ENCODE measurements at regions of chr1 and their contacts with region 1.

Region 1: GRCh38 chr1:58903514-58904298 is 119.9 kb upstream of the JUN start:
- DNase-seq: peak; percentile 85 to 98
- H3K4me3 ChIP-seq: peak overlapping the region; percentile 59 to 76
- H3K27ac ChIP-seq: peak overlapping the region; percentile 91 to 97
- H3K4me1 ChIP-seq: peaks cover 2 to 7% of the 10 kb centered on the region in 2 donors
- H3K27me3 ChIP-seq: no peaks in the 10 kb centered on the region
- CTCF ChIP-seq: no peak

Region 2: GRCh38 chr1:58401991-58402390 is 501.7 kb before region 1 on chr1:
- intact Hi-C with region 1: no loop called
- DNase-seq: no peak
- H3K4me3 ChIP-seq: no peak overlapping the region
- H3K27ac ChIP-seq: peak overlapping the region in 1 of 2 donors; percentile 56
- H3K4me1 ChIP-seq: no peaks in the 10 kb centered on the region
- H3K27me3 ChIP-seq: no peaks in the 10 kb centered on the region
- CTCF ChIP-seq: no peak

Region 3: DNA sequence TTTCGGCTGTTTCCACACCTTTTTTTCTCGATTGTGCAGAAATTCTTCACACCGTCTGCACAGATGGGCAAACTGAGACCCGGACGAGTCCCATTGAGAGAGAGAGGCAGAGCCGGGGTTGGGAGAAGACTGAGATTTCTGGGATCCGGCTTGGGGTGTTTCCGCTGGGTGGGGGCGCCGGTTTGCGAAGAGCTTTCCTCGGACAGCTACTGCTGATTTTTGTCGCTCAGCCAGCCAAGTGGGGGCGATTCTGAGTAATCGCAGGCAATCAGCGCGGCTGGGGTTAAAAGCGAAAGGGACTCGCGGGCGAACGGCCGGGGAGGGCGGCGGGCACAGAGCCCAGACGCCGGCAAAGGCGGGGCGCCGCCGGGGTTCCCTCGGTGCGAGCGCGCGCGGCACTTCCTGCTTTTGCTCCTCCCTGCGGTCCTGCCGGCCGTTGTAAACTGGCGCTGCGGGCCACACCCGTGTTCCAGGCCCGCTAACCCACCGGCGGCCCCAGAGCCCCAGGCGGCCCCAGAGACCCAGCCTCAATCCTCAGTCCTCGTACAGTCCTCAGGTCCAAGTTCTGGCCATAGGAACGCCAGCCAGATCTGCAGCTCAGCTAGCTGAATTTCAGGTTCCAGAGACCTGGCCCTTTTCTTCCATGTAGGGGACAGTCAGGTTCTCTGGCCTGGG is 87.5 kb before region 1 on chr1:
- intact Hi-C with region 1: loop called (anchors 2 kb)
- DNase-seq: peak; percentile 47 to 94
- H3K4me3 ChIP-seq: peak overlapping the region; percentile 64 to 83
- H3K27ac ChIP-seq: peak overlapping the region; percentile 86 to 97
- H3K4me1 ChIP-seq: peaks cover 5 to 25% of the 10 kb centered on the region in 2 donors
- H3K27me3 ChIP-seq: no peaks in the 10 kb centered on the region
- CTCF ChIP-seq: no peak

Region 4: GRCh38 chr1:58883037-58883887 is 20.4 kb before region 1 on chr1:
- intact Hi-C with region 1: loop called (anchors 2 kb)
- DNase-seq: peak; percentile 63 to 91
- H3K4me3 ChIP-seq: no peak overlapping the region
- H3K27ac ChIP-seq: peak overlapping the region; percentile 62 to 77
- H3K4me1 ChIP-seq: peaks cover 13 to 35% of the 10 kb centered on the region in 2 donors
- H3K27me3 ChIP-seq: no peaks in the 10 kb centered on the region
- CTCF ChIP-seq: no peak

Region 5: GRCh38 chr1:59061876-59062275 is 158.2 kb after region 1 on chr1:
- intact Hi-C with region 1: loop called (anchors 5 kb)
- DNase-seq: peak; percentile 26 to 93
- H3K4me3 ChIP-seq: peak overlapping the region; percentile 28 to 55
- H3K27ac ChIP-seq: peak overlapping the region; percentile 78 to 80
- H3K4me1 ChIP-seq: peaks cover 3 to 15% of the 10 kb centered on the region in 2 donors
- H3K27me3 ChIP-seq: no peaks in the 10 kb centered on the region
- CTCF ChIP-seq: no peak

Region 6: DNA sequence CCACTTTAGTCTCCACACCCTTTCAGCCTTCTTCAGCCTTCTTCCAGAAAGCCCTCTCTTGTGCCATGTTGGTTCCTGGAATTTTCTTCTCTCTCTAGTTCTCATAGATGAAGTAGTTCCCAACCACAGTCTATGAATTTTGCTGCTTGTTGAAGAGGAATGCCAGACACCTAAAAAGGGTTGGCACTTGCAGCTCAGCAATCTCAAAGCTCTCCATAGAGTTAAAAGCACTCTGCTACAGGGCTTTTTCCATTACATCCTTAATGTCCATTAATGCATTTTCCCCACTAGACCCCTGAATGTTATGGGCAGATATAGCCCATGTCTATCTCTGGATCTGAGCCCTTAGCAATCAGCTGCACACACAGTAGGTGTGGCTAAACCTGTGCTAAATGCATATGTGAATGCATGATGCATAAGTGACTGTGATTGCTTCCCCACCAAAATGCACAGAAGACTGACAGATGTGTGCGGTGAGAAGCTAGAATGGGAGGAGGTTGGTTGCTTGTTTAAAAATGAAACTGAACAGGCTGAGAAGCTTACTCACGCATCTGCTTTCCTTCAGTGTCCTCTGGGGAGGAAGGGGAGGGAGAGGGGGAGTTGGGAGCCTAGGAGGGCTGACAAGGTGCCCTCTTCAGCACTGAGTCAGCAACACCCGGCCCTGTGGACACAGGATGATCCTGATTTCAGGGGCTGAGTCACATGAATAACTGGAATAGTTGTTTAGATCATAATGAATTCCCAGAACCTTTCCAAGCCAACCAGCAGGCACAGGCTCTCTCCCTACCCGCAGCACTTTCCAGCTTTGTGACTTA is 247.1 kb after region 1 on chr1:
- intact Hi-C with region 1: loop called (anchors 5 kb)
- DNase-seq: peak; percentile 43 to 93
- H3K4me3 ChIP-seq: peak overlapping the region; percentile 41 to 52
- H3K27ac ChIP-seq: peak overlapping the region; percentile 73 to 81
- H3K4me1 ChIP-seq: peaks cover 0 to 30% of the 10 kb centered on the region in 2 donors
- H3K27me3 ChIP-seq: no peaks in the 10 kb centered on the region
- CTCF ChIP-seq: no peak

Region 7: GRCh38 chr1:59173721-59174120 is 270.0 kb after region 1 on chr1:
- intact Hi-C with region 1: no loop called
- DNase-seq: no peak
- H3K4me3 ChIP-seq: no peak overlapping the region
- H3K27ac ChIP-seq: no peak overlapping the region
- H3K4me1 ChIP-seq: peaks cover 0 to 1% of the 10 kb centered on the region in 2 donors
- H3K27me3 ChIP-seq: no peaks in the 10 kb centered on the region
- CTCF ChIP-seq: no peak

Region 8: DNA sequence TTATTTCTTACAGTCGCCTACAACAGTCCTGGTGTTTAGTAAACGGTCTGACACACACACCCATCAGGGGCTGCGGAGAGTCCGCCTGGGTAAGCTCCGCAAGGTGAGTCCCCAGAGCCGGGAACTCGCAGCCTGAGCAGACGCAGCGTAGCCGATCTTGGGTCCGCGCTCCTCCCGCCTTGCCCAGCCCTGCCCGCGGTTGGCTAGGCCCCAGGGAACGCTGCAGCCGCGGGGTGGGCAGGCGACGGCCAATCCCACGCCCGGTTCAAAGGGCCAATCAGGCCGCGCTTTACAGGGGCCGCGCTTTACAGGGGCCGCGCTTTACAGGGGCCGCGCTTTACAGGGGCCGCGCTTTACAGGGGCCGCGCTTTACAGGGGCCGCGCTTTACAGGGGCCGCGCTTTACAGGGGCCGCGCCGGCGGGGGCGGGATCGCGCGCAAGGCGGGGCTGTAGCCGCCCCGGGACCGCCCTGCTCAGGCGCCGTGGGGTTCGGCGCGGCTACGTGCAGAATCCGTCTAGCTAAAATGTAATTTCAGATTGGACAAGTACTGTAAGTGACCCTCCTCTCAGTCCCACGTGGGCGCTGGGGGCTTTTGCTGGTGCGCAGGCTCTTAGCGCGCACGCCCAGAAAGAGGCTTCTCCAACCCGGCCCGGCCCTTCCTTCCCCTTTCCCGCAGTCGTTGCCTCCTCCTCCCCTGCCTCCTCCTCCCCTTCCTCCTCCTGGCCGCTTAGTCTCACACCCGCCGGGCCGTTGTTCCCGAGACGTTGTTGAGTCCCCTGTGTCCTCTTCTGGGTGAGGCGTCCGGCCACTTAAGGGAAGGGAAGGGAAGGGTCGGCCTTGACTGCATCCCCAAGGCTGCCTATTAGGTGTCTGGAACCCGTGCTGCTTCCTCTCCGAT is 392.9 kb after region 1 on chr1 and contains the start of gene FGGY:
- intact Hi-C with region 1: loop called (anchors 1 kb)
- DNase-seq: peak; percentile 96 to 99
- H3K4me3 ChIP-seq: peak within 1 kb of the TSS; percentile 69 to 70
- H3K27ac ChIP-seq: peak within 1 kb of the TSS; percentile 96 to 99
- H3K4me1 ChIP-seq: peaks cover 11 to 13% of the 10 kb centered on the region in 2 donors
- H3K27me3 ChIP-seq: no peaks in the 10 kb centered on the region
- CTCF ChIP-seq: no peak
- total RNA-seq, gene FGGY: 7.0 TPM

Region 9: GRCh38 chr1:59393211-59394180 is 489.8 kb after region 1 on chr1:
- intact Hi-C with region 1: loop called (anchors 10 kb)
- DNase-seq: peak; percentile 58 to 94
- H3K4me3 ChIP-seq: no peak overlapping the region
- H3K27ac ChIP-seq: peak overlapping the region; percentile 91 to 93
- H3K4me1 ChIP-seq: peaks cover 7 to 30% of the 10 kb centered on the region in 2 donors
- H3K27me3 ChIP-seq: no peaks in the 10 kb centered on the region
- CTCF ChIP-seq: no peak